Sigmoid colon (tissue), 7 donors: ENCODE measurements at regions of chr2 and their contacts with region 1.

Region 1: GRCh38 chr2:55099878-55100820 is 49.9 kb upstream of the RTN4 start:
- DNase-seq: no peak
- H3K4me3 ChIP-seq: no peak overlapping the region
- H3K27ac ChIP-seq: peak overlapping the region; percentile 65 to 87 (median 84)
- H3K4me1 ChIP-seq: peaks cover 0 to 69% (median 59%) of the 10 kb centered on the region in 4 donors
- H3K27me3 ChIP-seq: no peaks in the 10 kb centered on the region
- CTCF ChIP-seq: no peak
- EP300 ChIP-seq: peak in 1 of 4 donors; percentile 63
- POLR2A ChIP-seq: no peak

Region 2: GRCh38 chr2:55159037-55159651 is 59.0 kb after region 1 on chr2:
- intact Hi-C with region 1: loop called (anchors 5 kb)
- DNase-seq: peak; percentile 78
- H3K4me3 ChIP-seq: no peak overlapping the region
- H3K27ac ChIP-seq: peak overlapping the region in 3 of 4 donors; percentile 7 to 78 (median 38)
- H3K4me1 ChIP-seq: peaks cover 0 to 79% (median 67%) of the 10 kb centered on the region in 4 donors
- H3K27me3 ChIP-seq: no peaks in the 10 kb centered on the region
- CTCF ChIP-seq: no peak
- EP300 ChIP-seq: no peak
- POLR2A ChIP-seq: no peak

Region 3: GRCh38 chr2:55268907-55269644 is 168.9 kb after region 1 on chr2 and contains the start of gene MTIF2:
- intact Hi-C with region 1: no loop called
- DNase-seq: peak; percentile 97
- H3K4me3 ChIP-seq: peak within 1 kb of the TSS; percentile 55 to 73 (median 67)
- H3K27ac ChIP-seq: peak within 1 kb of the TSS; percentile 86 to 90 (median 87)
- H3K4me1 ChIP-seq: peaks cover 0 to 18% (median 14%) of the 10 kb centered on the region in 4 donors
- H3K27me3 ChIP-seq: no peaks in the 10 kb centered on the region
- CTCF ChIP-seq: no peak
- EP300 ChIP-seq: peak in 1 of 4 donors; percentile 14
- POLR2A ChIP-seq: peak; percentile 16 to 31
- total RNA-seq, gene MTIF2: 15.0 to 27.7 (median 22.4) TPM